ENCODE measurements at regions of chr9 and their contacts with region 1.

Region 1: DNA sequence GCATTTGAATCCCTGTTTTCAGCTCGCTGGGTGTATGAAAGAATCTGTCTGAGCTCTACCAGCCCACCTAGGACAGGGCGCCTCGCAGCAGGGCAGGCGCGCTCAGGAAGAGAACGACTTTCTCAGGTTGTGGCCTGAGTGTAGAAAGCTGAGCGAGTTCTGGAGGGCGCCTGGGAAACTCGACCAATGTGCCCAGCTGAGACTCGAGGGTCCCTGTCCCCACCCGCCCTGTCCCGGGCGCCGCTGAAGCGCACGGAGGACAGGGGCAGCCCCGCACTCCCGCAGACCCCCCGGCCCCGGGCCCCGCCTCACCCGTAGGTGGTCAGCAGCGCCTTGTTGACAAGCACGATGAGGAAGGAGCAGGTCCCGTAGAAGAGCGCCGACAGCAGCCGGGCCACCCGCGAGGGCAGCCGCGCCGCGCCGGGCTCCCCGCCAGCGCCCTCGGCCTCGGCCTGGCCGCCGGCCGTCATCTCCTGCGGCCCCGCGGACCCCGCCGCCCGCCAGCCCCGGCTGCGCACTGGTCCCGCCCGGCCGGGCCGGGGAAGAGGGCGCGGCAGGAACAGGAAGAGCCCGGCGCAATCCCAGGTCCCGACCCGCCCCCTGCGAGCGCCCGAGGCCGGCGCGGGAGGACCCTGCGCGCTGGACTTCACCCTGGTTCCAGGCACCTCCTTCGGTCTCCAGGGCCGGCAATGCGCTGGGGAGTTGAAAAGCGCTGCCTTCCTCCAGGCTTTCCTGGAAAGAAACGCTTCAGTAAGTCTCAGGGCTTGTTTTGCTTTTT is at the start of gene SLC35D2:
- DNase-seq: peak; percentile 56
- H3K4me3 ChIP-seq: peak within 1 kb of the TSS; percentile 66 to 81 (median 72)
- H3K27ac ChIP-seq: peak within 1 kb of the TSS; percentile 25
- H3K4me1 ChIP-seq: peaks cover 4% of the 10 kb centered on the region
- H3K27me3 ChIP-seq: no peaks in the 10 kb centered on the region
- CTCF ChIP-seq: no peak
- total RNA-seq, gene SLC35D2: 16.7 to 20.9 TPM

Region 2: GRCh38 chr9:95181226-95181818 is 1202.0 kb before region 1 on chr9:
- CTCF ChIA-PET with region 1: no interaction called
- dilution Hi-C with region 1: no loop called
- in situ Hi-C with region 1: no loop called
- intact Hi-C with region 1: no loop called
- DNase-seq: no peak
- H3K4me3 ChIP-seq: no peak overlapping the region
- H3K27ac ChIP-seq: no peak overlapping the region
- H3K4me1 ChIP-seq: no peaks in the 10 kb centered on the region
- H3K27me3 ChIP-seq: no peaks in the 10 kb centered on the region
- CTCF ChIP-seq: peak; percentile 44 to 53

Region 3: DNA sequence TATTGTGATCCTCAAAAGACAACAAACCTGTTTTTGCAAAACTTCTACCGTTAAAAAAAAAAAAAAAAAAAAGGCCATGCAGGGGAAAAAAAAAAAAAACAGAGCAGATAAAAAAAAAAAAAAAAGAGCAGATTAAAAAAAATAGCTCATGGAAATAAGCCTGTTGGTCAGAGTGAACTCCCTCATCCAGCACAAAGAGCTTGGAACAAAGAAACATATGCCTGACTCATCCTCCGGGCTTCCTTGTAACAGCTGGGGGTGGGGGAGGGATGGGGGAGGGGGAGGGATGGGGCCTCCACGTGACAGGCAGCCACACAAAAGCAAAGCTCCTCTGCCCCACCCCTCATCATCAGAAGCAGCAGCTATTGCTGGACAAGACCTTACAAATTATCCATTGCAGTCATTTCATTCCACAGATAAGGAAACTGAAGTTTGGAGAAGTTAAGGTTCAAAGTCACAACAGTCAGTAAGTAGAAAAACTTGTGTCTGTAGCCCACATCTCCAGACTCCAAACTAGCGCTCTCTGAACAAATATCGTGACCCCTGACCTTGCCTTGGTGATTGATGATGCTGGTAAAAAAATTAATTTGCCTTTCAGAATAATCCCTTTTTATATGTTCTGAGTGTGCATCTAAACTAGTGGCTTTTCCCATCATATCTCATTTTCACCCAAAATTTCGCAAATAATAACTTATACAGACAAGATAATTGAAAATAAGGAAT is 38.7 kb before region 1 on chr9:
- CTCF ChIA-PET with region 1: no interaction called
- dilution Hi-C with region 1: no loop called
- in situ Hi-C with region 1: no loop called
- intact Hi-C with region 1: loop called (anchors 5 kb)
- DNase-seq: peak; percentile 76
- H3K4me3 ChIP-seq: no peak overlapping the region
- H3K27ac ChIP-seq: no peak overlapping the region
- H3K4me1 ChIP-seq: peaks cover 20% of the 10 kb centered on the region
- H3K27me3 ChIP-seq: no peaks in the 10 kb centered on the region
- CTCF ChIP-seq: no peak